Sigmoid colon (tissue), 7 donors: ENCODE measurements at regions of chr1 and their contacts with region 1.

Region 1: DNA sequence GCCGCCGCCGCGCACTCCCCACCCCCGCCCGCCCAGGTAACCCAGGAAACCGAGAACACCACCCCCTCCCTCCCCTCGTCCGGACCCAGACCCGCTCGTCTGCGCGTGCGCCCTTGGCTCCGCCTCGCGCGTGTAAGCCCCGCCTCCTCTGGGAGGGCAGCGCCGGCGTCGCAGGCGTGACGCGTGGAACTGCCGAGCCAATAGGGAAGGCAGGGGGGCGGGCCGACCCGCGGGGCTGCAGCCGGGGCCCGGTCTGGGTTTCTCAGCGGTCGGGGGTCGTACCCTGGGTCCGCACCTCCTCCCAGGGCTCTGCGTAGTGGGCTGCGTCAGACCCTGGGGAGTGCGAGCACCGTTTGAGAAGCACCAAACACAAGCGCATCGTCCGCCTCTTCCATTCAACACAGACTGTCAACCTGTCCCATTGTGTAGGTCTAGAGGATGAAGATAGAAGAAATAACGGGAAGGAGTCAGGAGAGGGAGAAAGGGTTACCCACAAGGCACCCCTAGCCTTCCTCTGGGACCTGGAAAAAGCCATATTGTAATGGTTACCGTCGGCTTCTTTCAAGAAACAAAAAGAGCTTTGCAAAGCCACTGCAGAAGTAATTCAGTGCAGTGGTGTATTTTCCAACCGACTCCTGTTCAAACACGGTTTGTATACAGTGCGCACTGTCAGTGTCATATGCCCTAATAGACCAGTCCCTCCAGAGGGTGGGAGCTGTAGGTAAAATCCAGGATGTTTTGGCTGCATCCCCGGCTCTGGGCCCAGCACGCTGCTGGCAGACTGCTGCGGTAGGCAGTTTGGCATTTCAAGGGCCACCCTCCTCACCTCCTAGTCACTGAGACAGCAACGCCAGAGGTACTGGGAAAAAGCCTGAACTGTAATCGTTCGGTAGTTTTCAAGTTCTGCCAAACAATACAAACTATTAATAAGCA is 473 bp upstream of the LYST start:
- DNase-seq: peak; percentile 97
- H3K4me3 ChIP-seq: peak overlapping the region; percentile 61 to 98 (median 88)
- H3K27ac ChIP-seq: peak overlapping the region; percentile 90 to 100 (median 97)
- H3K4me1 ChIP-seq: peaks cover 0 to 31% (median 21%) of the 10 kb centered on the region in 4 donors
- H3K27me3 ChIP-seq: no peaks in the 10 kb centered on the region
- CTCF ChIP-seq: no peak
- EP300 ChIP-seq: no peak
- POLR2A ChIP-seq: peak; percentile 64 to 71

Region 2: GRCh38 chr1:235910357-235911299 is 43.4 kb after region 1 on chr1:
- intact Hi-C with region 1: loop called (anchors 5 kb)
- DNase-seq: no peak
- H3K4me3 ChIP-seq: no peak overlapping the region
- H3K27ac ChIP-seq: peak overlapping the region; percentile 36 to 75 (median 54)
- H3K4me1 ChIP-seq: peaks cover 0 to 25% (median 16%) of the 10 kb centered on the region in 4 donors
- H3K27me3 ChIP-seq: no peaks in the 10 kb centered on the region
- CTCF ChIP-seq: no peak
- EP300 ChIP-seq: no peak
- POLR2A ChIP-seq: no peak

Region 3: DNA sequence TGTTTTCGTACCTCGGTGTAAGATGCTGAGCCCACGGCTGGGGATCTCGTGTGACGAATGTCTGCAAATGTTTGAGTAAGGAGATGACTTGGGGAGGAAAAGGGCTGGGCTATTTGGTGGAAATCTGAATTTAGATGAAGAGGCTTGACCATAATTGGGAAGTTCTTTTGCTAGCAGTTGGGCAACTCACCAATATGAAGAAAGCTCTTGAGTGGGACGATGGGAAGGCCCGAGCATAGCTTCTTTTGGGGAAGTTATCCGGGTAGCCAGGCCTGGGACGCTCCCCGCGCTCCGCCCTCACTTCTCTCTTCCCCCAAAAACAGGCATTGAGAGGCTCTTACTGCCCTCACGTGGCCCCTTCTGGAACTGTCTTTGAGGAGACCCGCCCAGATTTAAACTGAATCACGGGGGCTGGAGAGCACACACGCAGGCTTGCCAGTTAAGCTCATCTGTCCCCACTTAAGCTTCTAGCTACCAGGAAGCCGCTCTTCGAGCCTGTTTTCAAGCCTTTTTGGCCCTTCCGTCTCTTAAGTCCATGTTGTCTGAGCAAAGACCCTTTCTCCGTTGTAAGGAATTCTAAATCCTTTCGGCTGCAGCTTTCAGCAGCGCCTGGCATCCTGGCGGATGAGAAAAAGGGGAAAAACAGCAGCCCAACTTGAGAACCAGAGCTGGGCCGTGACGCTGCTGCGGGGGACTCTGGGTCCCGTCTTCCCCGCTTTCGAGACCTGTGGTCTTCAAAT is 104.6 kb after region 1 on chr1:
- intact Hi-C with region 1: loop called (anchors 2 kb)
- DNase-seq: peak; percentile 98
- H3K4me3 ChIP-seq: peak overlapping the region; percentile 10 to 52 (median 44)
- H3K27ac ChIP-seq: peak overlapping the region; percentile 88 to 98 (median 91)
- H3K4me1 ChIP-seq: peaks cover 0 to 22% (median 15%) of the 10 kb centered on the region in 4 donors
- H3K27me3 ChIP-seq: no peaks in the 10 kb centered on the region
- CTCF ChIP-seq: peak; percentile 76 to 82 (median 78)
- EP300 ChIP-seq: peak in 1 of 4 donors; percentile 3
- POLR2A ChIP-seq: peak; percentile 37 to 50

Region 4: GRCh38 chr1:236064674-236065508 is 197.7 kb after region 1 on chr1 and contains the start of gene NID1:
- intact Hi-C with region 1: loop called (anchors 5 kb)
- DNase-seq: peak; percentile 98
- H3K4me3 ChIP-seq: peak within 1 kb of the TSS; percentile 82 to 94 (median 90)
- H3K27ac ChIP-seq: peak within 1 kb of the TSS; percentile 97 to 100 (median 100)
- H3K4me1 ChIP-seq: peaks cover 0 to 65% (median 58%) of the 10 kb centered on the region in 4 donors
- H3K27me3 ChIP-seq: no peaks in the 10 kb centered on the region
- CTCF ChIP-seq: peak in 2 of 4 experiments; percentile 31 to 38
- EP300 ChIP-seq: peak in 3 of 4 donors; percentile 40 to 85 (median 61)
- POLR2A ChIP-seq: peak; percentile 85 to 86
- total RNA-seq, gene NID1: 136 to 242 (median 145) TPM